Cardiac septum (tissue), 1 donor: ENCODE measurements at regions of chr4 and their contacts with region 1.

Region 1: GRCh38 chr4:61200187-61200915 is at the start of gene ADGRL3:
- DNase-seq: no peak
- total RNA-seq, gene ADGRL3: 15.3 TPM

Region 2: GRCh38 chr4:61500883-61501282 is 300.5 kb after region 1 on chr4:
- intact Hi-C with region 1: loop called (anchors 10 kb)
- DNase-seq: no peak

Region 3: DNA sequence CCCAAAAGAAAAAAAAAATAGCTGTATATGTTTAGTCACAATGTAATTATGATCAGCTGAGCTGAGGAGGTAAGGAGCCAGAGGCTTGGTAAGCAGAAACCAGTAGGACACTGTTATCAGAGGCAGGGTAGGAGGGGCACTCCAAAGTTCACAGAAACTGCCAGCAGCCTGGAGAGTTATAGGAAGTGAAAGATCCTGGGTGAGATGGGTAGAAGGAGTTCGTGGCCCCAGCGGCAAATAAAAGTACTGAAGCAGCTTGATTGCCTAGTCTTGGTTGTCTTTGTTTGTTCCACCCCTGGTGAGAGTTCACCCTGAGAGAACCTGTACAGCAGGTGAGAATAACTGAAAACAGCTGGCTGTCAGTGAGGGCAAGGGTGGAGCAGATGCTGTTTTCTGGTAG is 340.6 kb after region 1 on chr4:
- intact Hi-C with region 1: loop called (anchors 10 kb)
- DNase-seq: no peak

Region 4: GRCh38 chr4:62135565-62136156 is 935.3 kb after region 1 on chr4:
- intact Hi-C with region 1: loop called (anchors 5 kb)
- DNase-seq: no peak